CD14-positive monocyte (primary cell): ENCODE measurements at regions of chr6 and their contacts with region 1.

Region 1: DNA sequence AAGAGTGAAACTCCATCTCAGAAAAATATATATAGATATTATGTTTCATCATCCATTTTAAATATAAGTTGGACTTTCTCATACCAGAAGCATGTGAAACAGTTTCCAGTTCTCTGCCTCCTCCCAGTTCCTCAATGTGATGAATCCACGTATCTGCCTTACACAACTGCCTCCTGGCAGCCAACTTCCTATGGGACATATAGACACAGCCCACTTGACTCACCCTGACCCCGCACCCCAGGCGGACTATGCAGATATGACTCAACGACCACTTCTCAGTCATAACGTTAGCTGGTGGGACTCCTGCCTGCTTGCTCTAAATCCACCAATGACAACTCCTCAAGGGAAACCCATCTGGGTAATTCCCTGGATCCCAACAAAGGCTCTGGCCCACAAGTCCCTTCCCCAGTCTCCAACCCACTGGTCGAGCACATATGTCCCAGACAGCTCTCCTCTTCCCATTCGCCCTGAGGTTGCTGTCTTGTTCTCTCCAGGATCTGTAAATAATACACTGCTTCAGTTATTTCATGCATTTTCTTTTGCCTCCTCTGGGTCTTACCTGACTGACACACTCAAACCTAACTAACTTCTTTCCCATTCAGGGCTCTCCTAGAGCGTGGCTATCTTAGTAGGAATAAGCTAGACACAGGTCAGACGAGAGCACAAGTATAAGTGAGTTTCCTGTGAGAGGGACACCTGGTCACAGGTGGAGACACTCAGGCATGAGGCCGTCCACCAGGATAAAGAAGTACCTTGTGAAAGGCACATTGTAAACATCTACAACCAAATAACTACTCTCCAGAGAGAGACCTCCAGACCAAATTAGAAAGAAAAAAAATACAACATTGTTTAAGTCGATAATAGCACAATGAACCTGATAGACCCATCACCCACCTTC is 548.5 kb downstream of the CD83 start:
- DNase-seq: peak; percentile 99 to 100 (median 100)
- H3K4me3 ChIP-seq: no peak overlapping the region
- H3K4me3 Mint-ChIP-seq: peak overlapping the region in 1 of 2 donors; percentile 69
- H3K27ac ChIP-seq: peak overlapping the region; percentile 75 to 89
- H3K27ac Mint-ChIP-seq: peak overlapping the region; percentile 94 to 99 (median 99)
- H3K4me1 ChIP-seq: peaks cover 31 to 33% of the 10 kb centered on the region in 2 donors
- H3K4me1 Mint-ChIP-seq: peaks cover 32% of the 10 kb centered on the region
- H3K27me3 ChIP-seq: no peaks in the 10 kb centered on the region
- H3K27me3 Mint-ChIP-seq: peaks cover 0 to 2% (median 0%) of the 10 kb centered on the region in 3 donors
- CTCF ChIP-seq: no peak

Region 2: GRCh38 chr6:14703586-14703985 is 37.5 kb after region 1 on chr6:
- intact Hi-C with region 1: loop called in 1 of 2 experiments (anchors 5 kb)
- DNase-seq: no peak
- H3K4me3 ChIP-seq: no peak overlapping the region
- H3K4me3 Mint-ChIP-seq: no peak overlapping the region
- H3K27ac ChIP-seq: no peak overlapping the region
- H3K27ac Mint-ChIP-seq: no peak overlapping the region
- H3K4me1 ChIP-seq: peaks cover 40 to 57% of the 10 kb centered on the region in 2 donors
- H3K4me1 Mint-ChIP-seq: peaks cover 70% of the 10 kb centered on the region
- H3K27me3 ChIP-seq: no peaks in the 10 kb centered on the region
- H3K27me3 Mint-ChIP-seq: peaks cover 0 to 2% (median 2%) of the 10 kb centered on the region in 3 donors
- CTCF ChIP-seq: no peak